HepG2 (cell line): ENCODE measurements at regions of chr2 and their contacts with region 1.

Region 1: DNA sequence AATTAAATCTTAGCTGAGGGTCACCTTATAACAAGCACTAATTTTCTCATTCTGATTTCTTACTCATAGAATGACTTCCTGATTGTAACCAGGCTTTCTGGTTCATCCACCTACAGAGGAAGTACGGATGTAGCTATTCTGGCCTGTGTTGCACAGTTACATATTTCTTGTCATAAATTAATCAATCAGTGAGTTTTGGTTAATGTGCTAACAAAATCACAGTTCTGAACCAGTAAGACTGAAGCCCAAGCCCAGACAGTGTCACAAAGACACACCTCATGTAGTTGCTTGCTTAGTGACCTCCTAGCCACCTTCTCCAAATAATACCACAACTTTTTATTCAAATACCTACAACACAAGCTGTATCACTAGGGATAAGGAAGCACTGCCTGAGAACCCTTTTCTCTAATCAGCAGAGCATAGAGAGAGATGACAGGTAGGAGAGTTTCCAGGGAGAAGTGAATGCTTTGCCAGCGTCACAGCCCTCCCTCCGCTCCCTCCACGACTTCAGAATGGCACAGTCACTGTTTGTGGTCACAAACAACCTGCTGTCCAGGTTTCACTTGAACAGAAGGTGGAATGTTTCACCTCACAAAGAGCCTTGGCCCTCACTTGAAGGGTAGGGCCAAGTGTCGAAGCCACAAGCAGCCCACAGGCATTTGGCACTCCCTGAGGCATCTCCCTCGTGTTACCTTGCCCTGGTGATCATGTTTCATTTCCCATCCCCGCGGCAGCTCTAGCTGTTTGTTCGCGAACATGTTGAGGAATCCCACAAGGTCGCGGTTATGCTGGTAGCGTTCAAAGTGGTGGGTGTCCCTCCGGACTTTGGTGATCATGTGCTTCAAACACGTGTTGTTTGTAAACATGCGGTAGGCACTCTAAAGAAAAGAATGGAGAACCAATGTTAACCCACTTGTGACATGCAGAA is 120.8 kb upstream of the STK17B start:
- DNase-seq: peak; percentile 12
- ATAC-seq: peak; percentile 53
- H3K4me3 ChIP-seq: no peak overlapping the region
- H3K27ac ChIP-seq: no peak overlapping the region
- H3K4me1 ChIP-seq: no peaks in the 10 kb centered on the region
- H3K27me3 ChIP-seq: no peaks in the 10 kb centered on the region
- CTCF ChIP-seq: no peak
- EP300 ChIP-seq: no peak
- POLR2A ChIP-seq: no peak
- RAD21 ChIP-seq: no peak

Region 2: GRCh38 chr2:196453613-196454047 is 161.5 kb after region 1 on chr2:
- CTCF ChIA-PET with region 1: no interaction called
- POLR2A ChIA-PET with region 1: no interaction called
- in situ Hi-C with region 1: loop called (anchors 10 kb)
- intact Hi-C with region 1: no loop called
- DNase-seq: peak; percentile 52
- ATAC-seq: peak; percentile 89
- H3K4me3 ChIP-seq: no peak overlapping the region
- H3K27ac ChIP-seq: no peak overlapping the region
- H3K4me1 ChIP-seq: no peaks in the 10 kb centered on the region
- H3K27me3 ChIP-seq: no peaks in the 10 kb centered on the region
- CTCF ChIP-seq: peak; percentile 67
- EP300 ChIP-seq: no peak
- POLR2A ChIP-seq: no peak
- RAD21 ChIP-seq: no peak